ENCODE measurements at regions of chrX and their contacts with region 1.

Region 1: GRCh38 chrX:13688958-13689740 is at the start of gene RAB9A:
- DNase-seq: peak; percentile 68 to 76
- ATAC-seq: peak; percentile 90
- H3K4me3 ChIP-seq: peak within 1 kb of the TSS; percentile 71 to 82 (median 74)
- H3K27ac ChIP-seq: peak within 1 kb of the TSS; percentile 91 to 98 (median 94)
- H3K4me1 ChIP-seq: peaks cover 24 to 30% of the 10 kb centered on the region in 2 donors
- H3K27me3 ChIP-seq: no peaks in the 10 kb centered on the region
- CTCF ChIP-seq: no peak
- POLR2A ChIP-seq: peak; percentile 88 to 94
- total RNA-seq, gene RAB9A: 15.0 to 21.7 (median 18.5) TPM

Region 2: DNA sequence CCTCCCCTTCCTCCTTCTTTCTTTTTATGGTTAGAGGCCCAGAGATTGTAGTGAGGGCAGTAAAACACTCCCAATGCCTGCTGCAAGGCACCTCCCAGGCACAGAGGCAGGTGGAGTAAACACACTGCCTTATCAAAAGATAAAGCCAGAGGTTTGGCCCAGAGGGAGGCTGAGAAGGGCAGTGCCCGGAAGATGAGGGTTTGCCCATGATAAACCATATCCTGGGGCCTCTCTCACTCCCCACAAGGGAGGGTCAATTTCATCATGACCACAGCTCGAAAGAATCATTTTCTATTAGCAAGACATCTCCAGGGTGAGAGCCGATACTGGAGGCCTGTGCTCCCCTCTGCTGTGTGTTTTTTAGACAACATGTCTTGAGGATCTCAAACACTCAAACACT is 546.3 kb before region 1 on chrX:
- in situ Hi-C with region 1: no loop called
- intact Hi-C with region 1: no loop called
- DNase-seq: no peak
- ATAC-seq: no peak
- H3K4me3 ChIP-seq: no peak overlapping the region
- H3K27ac ChIP-seq: no peak overlapping the region
- H3K4me1 ChIP-seq: no peaks in the 10 kb centered on the region
- H3K27me3 ChIP-seq: no peaks in the 10 kb centered on the region
- CTCF ChIP-seq: no peak
- POLR2A ChIP-seq: no peak

Region 3: DNA sequence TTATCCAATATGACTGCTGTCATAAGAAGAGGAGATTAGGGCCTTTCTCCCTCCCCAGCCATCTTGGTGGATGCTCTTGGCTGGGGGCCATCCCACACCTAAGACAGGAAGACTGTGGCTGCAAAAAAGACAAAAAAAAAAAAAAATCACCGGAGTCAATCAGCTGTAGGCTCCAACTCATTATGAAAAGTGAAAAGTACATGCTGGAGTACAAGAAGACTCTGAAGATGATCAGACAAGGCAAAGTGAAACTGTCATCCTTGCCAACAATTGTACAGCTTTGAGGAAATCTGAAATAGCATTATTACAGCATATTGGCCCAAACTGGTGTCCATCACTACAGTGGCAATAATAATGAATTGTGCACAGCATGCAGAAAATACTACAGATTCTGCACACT is 114.5 kb before region 1 on chrX:
- in situ Hi-C with region 1: no loop called
- intact Hi-C with region 1: no loop called
- DNase-seq: no peak
- ATAC-seq: no peak
- H3K4me3 ChIP-seq: no peak overlapping the region
- H3K27ac ChIP-seq: no peak overlapping the region
- H3K4me1 ChIP-seq: no peaks in the 10 kb centered on the region
- H3K27me3 ChIP-seq: peaks cover 0 to 21% (median 6%) of the 10 kb centered on the region in 3 donors
- CTCF ChIP-seq: no peak
- POLR2A ChIP-seq: no peak

Region 4: GRCh38 chrX:13721819-13722519 is 32.8 kb after region 1 on chrX:
- in situ Hi-C with region 1: no loop called
- intact Hi-C with region 1: loop called (anchors 2 kb)
- DNase-seq: no peak
- ATAC-seq: peak; percentile 69 to 85
- H3K4me3 ChIP-seq: no peak overlapping the region
- H3K27ac ChIP-seq: peak overlapping the region; percentile 64 to 74 (median 72)
- H3K4me1 ChIP-seq: peaks cover 9 to 13% of the 10 kb centered on the region in 2 donors
- H3K27me3 ChIP-seq: no peaks in the 10 kb centered on the region
- CTCF ChIP-seq: no peak
- POLR2A ChIP-seq: no peak

Region 5: GRCh38 chrX:13734278-13735172 is 45.4 kb after region 1 on chrX and contains the starts of genes OFD1 and TRAPPC2:
- in situ Hi-C with region 1: no loop called
- intact Hi-C with region 1: loop called (anchors 1 kb)
- DNase-seq: peak; percentile 86 to 89
- ATAC-seq: peak; percentile 99
- H3K4me3 ChIP-seq: peak within 1 kb of the TSS; percentile 72 to 94 (median 82)
- H3K27ac ChIP-seq: peak within 1 kb of the TSS; percentile 90 to 93 (median 92)
- H3K4me1 ChIP-seq: peaks cover 6 to 12% of the 10 kb centered on the region in 2 donors
- H3K27me3 ChIP-seq: no peaks in the 10 kb centered on the region
- CTCF ChIP-seq: no peak
- POLR2A ChIP-seq: peak; percentile 87 to 91
- total RNA-seq, gene OFD1: 2.8 to 8.0 (median 7.0) TPM
- total RNA-seq, gene TRAPPC2: 1.4 to 4.3 (median 2.9) TPM

Region 6: GRCh38 chrX:13764765-13765164 is 75.6 kb after region 1 on chrX:
- in situ Hi-C with region 1: no loop called
- intact Hi-C with region 1: no loop called
- DNase-seq: no peak
- ATAC-seq: no peak
- H3K4me3 ChIP-seq: no peak overlapping the region
- H3K27ac ChIP-seq: peak overlapping the region; percentile 18 to 66 (median 61)
- H3K4me1 ChIP-seq: no peaks in the 10 kb centered on the region
- H3K27me3 ChIP-seq: no peaks in the 10 kb centered on the region
- CTCF ChIP-seq: peak in 1 of 5 experiments; percentile 18
- POLR2A ChIP-seq: no peak

Measured in gastrocnemius medialis (tissue), 4 donors.